ENCODE measurements at regions of chr1 and their contacts with region 1.

Region 1: DNA sequence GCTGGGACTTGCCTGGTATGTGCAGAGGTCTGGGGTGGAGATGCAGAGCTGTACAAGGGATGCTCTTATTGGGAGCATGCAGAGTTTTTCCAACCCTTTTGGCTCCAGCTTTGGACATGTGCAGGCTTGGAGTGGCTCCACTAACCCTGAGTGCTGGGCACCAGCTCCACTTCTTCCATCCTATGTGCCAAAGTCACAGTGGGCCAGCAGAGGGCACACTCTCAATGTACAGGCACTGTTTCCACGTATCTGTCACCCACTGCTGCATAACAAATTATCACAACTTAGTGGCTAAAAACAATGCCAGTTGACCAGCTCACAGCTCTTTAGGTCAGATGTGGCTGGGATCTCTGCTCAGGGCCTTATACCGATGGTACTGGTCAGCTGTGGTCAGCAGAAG is 631.8 kb downstream of the AJAP1 start:
- DNase-seq: peak in 4 of 9 donors; percentile 6 to 34 (median 22)
- ATAC-seq: peak; percentile 18
- H3K4me3 ChIP-seq: no peak overlapping the region
- H3K4me3 Mint-ChIP-seq: no peak overlapping the region
- H3K27ac ChIP-seq: no peak overlapping the region
- H3K27ac Mint-ChIP-seq: no peak overlapping the region
- H3K4me1 ChIP-seq: no peaks in the 10 kb centered on the region
- H3K4me1 Mint-ChIP-seq: peaks cover 0 to 23% (median 12%) of the 10 kb centered on the region in 7 donors
- H3K27me3 ChIP-seq: no peaks in the 10 kb centered on the region
- H3K27me3 Mint-ChIP-seq: peaks cover 0 to 12% (median 0%) of the 10 kb centered on the region in 5 donors

Region 2: GRCh38 chr1:4851385-4852065 is 434.7 kb before region 1 on chr1:
- CTCF ChIA-PET with region 1: no interaction called
- POLR2A ChIA-PET with region 1: no interaction called
- intact Hi-C with region 1: no loop called
- DNase-seq: no peak
- ATAC-seq: no peak
- H3K4me3 ChIP-seq: no peak overlapping the region
- H3K4me3 Mint-ChIP-seq: no peak overlapping the region
- H3K27ac ChIP-seq: no peak overlapping the region
- H3K27ac Mint-ChIP-seq: no peak overlapping the region
- H3K4me1 ChIP-seq: no peaks in the 10 kb centered on the region
- H3K4me1 Mint-ChIP-seq: no peaks in the 10 kb centered on the region
- H3K27me3 ChIP-seq: no peaks in the 10 kb centered on the region
- H3K27me3 Mint-ChIP-seq: peaks cover 0 to 24% (median 12%) of the 10 kb centered on the region in 5 donors

Region 3: GRCh38 chr1:5231541-5232315 is 54.5 kb before region 1 on chr1:
- CTCF ChIA-PET with region 1: no interaction called
- POLR2A ChIA-PET with region 1: no interaction called
- intact Hi-C with region 1: no loop called
- DNase-seq: no peak
- ATAC-seq: no peak
- H3K4me3 ChIP-seq: no peak overlapping the region
- H3K4me3 Mint-ChIP-seq: no peak overlapping the region
- H3K27ac ChIP-seq: no peak overlapping the region
- H3K27ac Mint-ChIP-seq: no peak overlapping the region
- H3K4me1 ChIP-seq: no peaks in the 10 kb centered on the region
- H3K4me1 Mint-ChIP-seq: peaks cover 0 to 16% (median 4%) of the 10 kb centered on the region in 7 donors
- H3K27me3 ChIP-seq: no peaks in the 10 kb centered on the region
- H3K27me3 Mint-ChIP-seq: peaks cover 4 to 16% (median 11%) of the 10 kb centered on the region in 5 donors

Region 4: DNA sequence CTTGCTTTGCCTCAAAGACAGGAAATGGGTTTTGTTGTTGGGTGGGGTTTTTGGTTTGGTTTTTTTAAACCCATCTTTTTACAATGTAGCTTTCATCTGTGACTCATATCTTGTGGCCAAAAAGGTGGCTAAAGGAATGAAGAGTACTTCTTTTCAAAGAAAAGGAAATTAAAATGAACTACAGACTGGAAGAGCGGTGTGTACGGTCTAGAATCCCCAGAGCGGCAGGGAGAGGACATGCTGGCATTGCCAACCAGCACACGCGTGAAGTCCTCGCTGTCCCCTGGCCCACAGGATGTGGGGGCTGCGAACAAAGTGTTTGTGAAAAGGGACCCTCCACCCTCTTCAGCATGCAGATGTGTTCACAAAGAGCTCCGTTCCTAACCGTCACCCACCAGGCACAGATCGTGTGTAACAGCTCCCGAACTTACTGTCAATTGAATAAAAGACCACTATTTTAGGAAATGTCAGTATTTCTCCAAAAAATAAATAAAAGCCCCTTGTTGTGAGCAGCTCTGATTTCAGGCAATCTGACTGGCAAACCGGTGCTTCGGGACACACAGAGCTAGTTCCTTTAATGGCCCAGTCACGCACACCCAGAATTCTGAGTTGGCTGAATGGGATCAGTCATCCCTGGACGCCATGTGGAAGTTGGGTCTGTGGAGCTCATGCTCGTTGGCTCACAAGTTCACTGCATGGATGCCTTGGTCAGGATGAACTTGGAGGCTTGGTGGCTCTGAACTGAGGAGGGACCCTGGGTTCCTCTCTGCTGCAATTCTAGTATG is 103.0 kb after region 1 on chr1:
- CTCF ChIA-PET with region 1: interaction called, 12 read pairs
- POLR2A ChIA-PET with region 1: interaction called, 8 read pairs
- intact Hi-C with region 1: loop called in 1 of 2 experiments (anchors 1 kb)
- DNase-seq: peak in 7 of 9 donors; percentile 55 to 79 (median 67)
- ATAC-seq: peak; percentile 71
- H3K4me3 ChIP-seq: peak overlapping the region; percentile 50
- H3K4me3 Mint-ChIP-seq: peak overlapping the region in 8 of 10 donors; percentile 40 to 86 (median 80)
- H3K27ac ChIP-seq: peak overlapping the region; percentile 37
- H3K27ac Mint-ChIP-seq: peak overlapping the region in 7 of 9 donors; percentile 86 to 95 (median 91)
- H3K4me1 ChIP-seq: peaks cover 35 to 58% of the 10 kb centered on the region in 2 donors
- H3K4me1 Mint-ChIP-seq: peaks cover 18 to 34% (median 23%) of the 10 kb centered on the region in 7 donors
- H3K27me3 ChIP-seq: no peaks in the 10 kb centered on the region
- H3K27me3 Mint-ChIP-seq: peaks cover 0 to 12% (median 0%) of the 10 kb centered on the region in 5 donors

Region 5: GRCh38 chr1:5448486-5448885 is 162.2 kb after region 1 on chr1:
- CTCF ChIA-PET with region 1: interaction called, 12 read pairs
- POLR2A ChIA-PET with region 1: no interaction called
- intact Hi-C with region 1: loop called in 1 of 2 experiments (anchors 1 kb)
- DNase-seq: peak in 2 of 9 donors; percentile 2 to 8
- ATAC-seq: no peak
- H3K4me3 ChIP-seq: no peak overlapping the region
- H3K4me3 Mint-ChIP-seq: no peak overlapping the region
- H3K27ac ChIP-seq: no peak overlapping the region
- H3K27ac Mint-ChIP-seq: no peak overlapping the region
- H3K4me1 ChIP-seq: no peaks in the 10 kb centered on the region
- H3K4me1 Mint-ChIP-seq: peaks cover 0 to 4% (median 0%) of the 10 kb centered on the region in 7 donors
- H3K27me3 ChIP-seq: no peaks in the 10 kb centered on the region
- H3K27me3 Mint-ChIP-seq: peaks cover 0 to 10% (median 0%) of the 10 kb centered on the region in 5 donors

Region 6: GRCh38 chr1:5514519-5515183 is 228.4 kb after region 1 on chr1:
- CTCF ChIA-PET with region 1: interaction called, 9 read pairs
- POLR2A ChIA-PET with region 1: no interaction called
- intact Hi-C with region 1: loop called in 1 of 2 experiments (anchors 1 kb)
- DNase-seq: peak; percentile 29 to 75 (median 60)
- ATAC-seq: peak; percentile 72
- H3K4me3 ChIP-seq: no peak overlapping the region
- H3K4me3 Mint-ChIP-seq: no peak overlapping the region
- H3K27ac ChIP-seq: no peak overlapping the region
- H3K27ac Mint-ChIP-seq: no peak overlapping the region
- H3K4me1 ChIP-seq: no peaks in the 10 kb centered on the region
- H3K4me1 Mint-ChIP-seq: peaks cover 0 to 10% (median 5%) of the 10 kb centered on the region in 7 donors
- H3K27me3 ChIP-seq: no peaks in the 10 kb centered on the region
- H3K27me3 Mint-ChIP-seq: peaks cover 0 to 16% (median 10%) of the 10 kb centered on the region in 5 donors

Region 7: DNA sequence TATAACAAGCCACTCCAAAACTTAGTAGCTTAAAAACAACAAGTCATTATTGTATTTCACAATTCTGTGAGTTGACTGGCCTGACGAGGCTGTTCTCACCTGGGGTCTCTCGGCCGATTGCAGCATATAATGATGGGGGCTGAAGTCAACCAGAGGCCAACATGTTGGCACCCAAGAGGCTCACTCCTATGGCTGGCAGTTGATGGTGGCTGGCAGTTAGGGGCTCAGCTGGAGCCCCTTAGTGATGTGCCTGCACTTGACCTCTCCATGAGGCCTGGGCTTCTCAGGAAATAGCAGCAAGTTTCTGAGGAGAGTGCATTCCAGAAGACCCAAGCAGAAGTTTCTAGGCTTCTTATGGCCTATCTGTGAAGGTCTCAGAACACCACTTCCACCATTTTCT is 246.6 kb after region 1 on chr1:
- CTCF ChIA-PET with region 1: no interaction called
- POLR2A ChIA-PET with region 1: no interaction called
- intact Hi-C with region 1: no loop called
- DNase-seq: no peak
- ATAC-seq: no peak
- H3K4me3 ChIP-seq: no peak overlapping the region
- H3K4me3 Mint-ChIP-seq: no peak overlapping the region
- H3K27ac ChIP-seq: no peak overlapping the region
- H3K27ac Mint-ChIP-seq: no peak overlapping the region
- H3K4me1 ChIP-seq: no peaks in the 10 kb centered on the region
- H3K4me1 Mint-ChIP-seq: no peaks in the 10 kb centered on the region
- H3K27me3 ChIP-seq: no peaks in the 10 kb centered on the region
- H3K27me3 Mint-ChIP-seq: peaks cover 2 to 25% (median 14%) of the 10 kb centered on the region in 5 donors